ENCODE measurements at regions of chr17 and their contacts with region 1.

Region 1: GRCh38 chr17:51540151-51540550 is 279.8 kb downstream of the UTP18 start:
- DNase-seq: no peak
- H3K4me3 ChIP-seq: no peak overlapping the region
- H3K27ac ChIP-seq: no peak overlapping the region
- H3K4me1 ChIP-seq: no peaks in the 10 kb centered on the region
- H3K27me3 ChIP-seq: no peaks in the 10 kb centered on the region
- CTCF ChIP-seq: no peak

Region 2: GRCh38 chr17:51298508-51299371 is 241.4 kb before region 1 on chr17:
- CTCF ChIA-PET with region 1: interaction called, 4 read pairs
- dilution Hi-C with region 1: no loop called
- in situ Hi-C with region 1: no loop called
- intact Hi-C with region 1: loop called (anchors 1 kb)
- DNase-seq: peak; percentile 16
- H3K4me3 ChIP-seq: no peak overlapping the region
- H3K27ac ChIP-seq: no peak overlapping the region
- H3K4me1 ChIP-seq: no peaks in the 10 kb centered on the region
- H3K27me3 ChIP-seq: no peaks in the 10 kb centered on the region
- CTCF ChIP-seq: peak; percentile 72 to 79

Region 3: GRCh38 chr17:51322390-51323029 is 217.6 kb before region 1 on chr17:
- CTCF ChIA-PET with region 1: no interaction called
- dilution Hi-C with region 1: no loop called
- in situ Hi-C with region 1: no loop called
- intact Hi-C with region 1: loop called (anchors 2 kb)
- DNase-seq: peak; percentile 39
- H3K4me3 ChIP-seq: no peak overlapping the region
- H3K27ac ChIP-seq: no peak overlapping the region
- H3K4me1 ChIP-seq: no peaks in the 10 kb centered on the region
- H3K27me3 ChIP-seq: no peaks in the 10 kb centered on the region
- CTCF ChIP-seq: peak; percentile 46 to 70

Region 4: DNA sequence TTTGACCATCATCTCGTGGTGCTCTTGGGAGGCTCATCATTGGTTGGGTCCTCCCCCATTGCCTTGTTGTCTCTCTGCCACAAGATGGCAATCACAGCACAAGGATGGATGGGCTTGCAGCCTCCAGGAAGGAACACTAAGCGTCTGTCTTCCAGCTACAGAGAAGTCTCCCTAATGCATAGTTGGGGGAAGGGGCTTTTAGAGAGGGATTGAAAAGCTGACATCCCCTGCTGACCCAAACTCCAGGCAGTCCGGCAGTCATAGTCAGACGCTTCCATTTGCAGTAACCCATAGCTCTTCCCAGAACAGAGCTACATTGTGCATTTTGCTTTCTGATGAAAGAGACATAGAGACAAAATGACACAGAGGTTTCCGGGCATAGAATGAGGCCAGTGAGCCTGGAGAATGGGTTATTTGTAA is 168.4 kb before region 1 on chr17:
- CTCF ChIA-PET with region 1: interaction called, 11 read pairs
- dilution Hi-C with region 1: no loop called
- in situ Hi-C with region 1: loop called in 1 of 2 experiments (anchors 25 kb)
- intact Hi-C with region 1: loop called (anchors 1 kb)
- DNase-seq: peak; percentile 47
- H3K4me3 ChIP-seq: no peak overlapping the region
- H3K27ac ChIP-seq: no peak overlapping the region
- H3K4me1 ChIP-seq: no peaks in the 10 kb centered on the region
- H3K27me3 ChIP-seq: no peaks in the 10 kb centered on the region
- CTCF ChIP-seq: peak; percentile 77 to 87

Region 5: GRCh38 chr17:51461578-51462004 is 78.6 kb before region 1 on chr17:
- CTCF ChIA-PET with region 1: interaction called, 4 read pairs
- dilution Hi-C with region 1: loop called (anchors 5 kb)
- in situ Hi-C with region 1: no loop called
- intact Hi-C with region 1: loop called (anchors 5 kb)
- DNase-seq: peak; percentile 24
- H3K4me3 ChIP-seq: no peak overlapping the region
- H3K27ac ChIP-seq: no peak overlapping the region
- H3K4me1 ChIP-seq: no peaks in the 10 kb centered on the region
- H3K27me3 ChIP-seq: no peaks in the 10 kb centered on the region
- CTCF ChIP-seq: peak; percentile 85 to 87

Region 6: DNA sequence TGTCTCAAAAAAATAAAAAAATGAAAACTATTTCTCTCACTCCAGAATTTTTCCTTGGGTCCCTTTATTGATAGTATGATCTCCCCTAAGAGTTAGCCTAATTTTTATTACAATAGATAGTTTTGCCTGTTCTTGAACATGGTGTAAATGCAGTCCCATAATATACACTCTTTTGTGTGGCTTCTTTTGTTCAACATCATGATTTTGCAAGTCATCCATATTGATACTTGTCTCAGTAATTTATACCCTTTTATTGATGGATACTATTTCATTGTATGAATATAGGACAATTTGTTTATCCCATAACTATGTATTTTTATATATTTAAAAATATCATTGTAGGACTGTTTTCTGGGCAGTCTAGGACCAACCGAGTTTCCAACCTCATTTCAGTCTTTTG is 72.8 kb before region 1 on chr17:
- CTCF ChIA-PET with region 1: no interaction called
- dilution Hi-C with region 1: loop called (anchors 5 kb)
- in situ Hi-C with region 1: loop called in 1 of 2 experiments (anchors 10 kb)
- intact Hi-C with region 1: loop called (anchors 5 kb)
- DNase-seq: no peak
- H3K4me3 ChIP-seq: no peak overlapping the region
- H3K27ac ChIP-seq: no peak overlapping the region
- H3K4me1 ChIP-seq: no peaks in the 10 kb centered on the region
- H3K27me3 ChIP-seq: no peaks in the 10 kb centered on the region
- CTCF ChIP-seq: no peak

Region 7: GRCh38 chr17:51472670-51473205 is 67.4 kb before region 1 on chr17:
- CTCF ChIA-PET with region 1: no interaction called
- dilution Hi-C with region 1: loop called (anchors 5 kb)
- in situ Hi-C with region 1: loop called in 1 of 2 experiments (anchors 10 kb)
- intact Hi-C with region 1: no loop called
- DNase-seq: no peak
- H3K4me3 ChIP-seq: no peak overlapping the region
- H3K27ac ChIP-seq: no peak overlapping the region
- H3K4me1 ChIP-seq: no peaks in the 10 kb centered on the region
- H3K27me3 ChIP-seq: peaks cover 8% of the 10 kb centered on the region
- CTCF ChIP-seq: no peak

Region 8: DNA sequence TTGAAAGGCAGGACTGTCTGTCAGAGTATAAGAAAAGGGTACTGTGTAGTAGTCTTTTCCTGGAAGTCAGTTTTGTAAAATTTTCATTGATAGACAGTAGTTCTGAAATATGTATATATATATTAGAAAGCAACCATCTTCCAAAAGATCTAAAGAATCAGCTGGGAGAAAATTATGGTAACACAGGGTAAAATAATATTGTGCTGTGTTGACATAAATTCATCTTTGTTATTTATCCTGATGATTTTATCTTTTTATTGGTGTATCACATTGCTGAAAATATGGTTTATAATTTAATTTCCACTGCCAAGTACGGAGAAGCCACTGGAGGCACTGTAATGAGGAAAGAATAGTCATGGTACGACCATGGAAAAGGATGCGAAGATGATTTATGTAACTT is 293.5 kb after region 1 on chr17:
- CTCF ChIA-PET with region 1: no interaction called
- dilution Hi-C with region 1: no loop called
- in situ Hi-C with region 1: no loop called
- intact Hi-C with region 1: no loop called
- DNase-seq: no peak
- H3K4me3 ChIP-seq: no peak overlapping the region
- H3K27ac ChIP-seq: no peak overlapping the region
- H3K4me1 ChIP-seq: no peaks in the 10 kb centered on the region
- H3K27me3 ChIP-seq: no peaks in the 10 kb centered on the region
- CTCF ChIP-seq: no peak

Region 9: DNA sequence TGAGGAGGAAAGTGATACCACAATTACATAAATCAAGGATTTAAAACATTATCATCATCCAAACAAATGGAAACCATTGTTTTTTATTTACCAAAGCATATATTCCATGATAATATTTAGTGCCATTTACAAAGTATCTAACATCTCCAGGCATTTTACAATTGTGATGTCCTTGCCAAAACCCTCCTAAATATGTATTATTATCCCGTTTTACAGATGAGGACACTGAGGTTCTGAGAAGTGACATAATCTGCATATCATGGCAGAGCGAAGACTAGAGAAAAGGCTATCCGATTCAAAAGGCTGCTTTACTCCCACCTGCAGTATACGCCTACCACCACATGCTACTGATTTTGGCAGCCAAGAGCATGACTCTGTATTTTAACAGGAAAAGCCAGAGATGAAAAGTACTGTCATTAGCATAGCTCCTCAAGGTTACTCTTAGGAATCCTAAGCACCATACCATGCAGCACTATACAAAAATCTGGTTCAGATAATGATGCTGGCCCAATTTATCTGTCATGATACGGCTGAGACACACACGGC is 317.0 kb after region 1 on chr17:
- CTCF ChIA-PET with region 1: no interaction called
- dilution Hi-C with region 1: no loop called
- in situ Hi-C with region 1: no loop called
- intact Hi-C with region 1: no loop called
- DNase-seq: no peak
- H3K4me3 ChIP-seq: no peak overlapping the region
- H3K27ac ChIP-seq: no peak overlapping the region
- H3K4me1 ChIP-seq: no peaks in the 10 kb centered on the region
- H3K27me3 ChIP-seq: peaks cover 3% of the 10 kb centered on the region
- CTCF ChIP-seq: peak in 1 of 2 donors; percentile 2

Region 10: DNA sequence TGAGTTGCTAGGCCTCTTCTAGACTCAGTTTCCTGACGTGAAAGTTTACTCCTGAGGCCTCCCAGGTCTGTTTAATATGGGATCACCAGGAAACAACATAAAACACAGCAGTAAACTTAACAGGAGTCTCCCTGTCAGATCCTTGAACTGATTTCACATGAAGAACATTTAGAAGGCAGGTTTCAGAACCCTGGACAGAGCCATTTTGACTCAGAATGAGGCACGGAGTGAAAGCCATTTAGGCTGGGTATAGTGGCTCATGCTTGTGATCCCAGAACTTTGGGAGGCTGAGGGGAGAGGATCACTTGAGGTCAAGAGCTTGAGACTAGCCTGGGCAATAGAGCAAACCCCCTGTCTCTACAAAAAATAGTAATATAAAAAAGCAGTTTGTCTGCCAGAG is 329.2 kb after region 1 on chr17:
- CTCF ChIA-PET with region 1: no interaction called
- dilution Hi-C with region 1: no loop called
- in situ Hi-C with region 1: no loop called
- intact Hi-C with region 1: no loop called
- DNase-seq: peak; percentile 19
- H3K4me3 ChIP-seq: no peak overlapping the region
- H3K27ac ChIP-seq: no peak overlapping the region
- H3K4me1 ChIP-seq: no peaks in the 10 kb centered on the region
- H3K27me3 ChIP-seq: peaks cover 2% of the 10 kb centered on the region
- CTCF ChIP-seq: no peak